Heart left ventricle (tissue), 16 donors: ENCODE measurements at regions of chr1 and their contacts with region 1.

Region 1: GRCh38 chr1:221530791-221531190 is 211.1 kb downstream of the DUSP10 start:
- DNase-seq: no peak
- ATAC-seq: no peak
- H3K4me3 ChIP-seq: no peak overlapping the region
- H3K27ac ChIP-seq: no peak overlapping the region
- H3K4me1 ChIP-seq: no peaks in the 10 kb centered on the region
- H3K27me3 ChIP-seq: peaks cover 0 to 6% (median 0%) of the 10 kb centered on the region in 9 donors
- CTCF ChIP-seq: no peak
- POLR2A ChIP-seq: no peak

Region 2: GRCh38 chr1:221085712-221086375 is 444.9 kb before region 1 on chr1:
- intact Hi-C with region 1: no loop called
- DNase-seq: no peak
- ATAC-seq: no peak
- H3K4me3 ChIP-seq: no peak overlapping the region
- H3K27ac ChIP-seq: no peak overlapping the region
- H3K4me1 ChIP-seq: peaks cover 0 to 10% (median 0%) of the 10 kb centered on the region in 12 donors
- H3K27me3 ChIP-seq: no peaks in the 10 kb centered on the region
- CTCF ChIP-seq: no peak
- POLR2A ChIP-seq: no peak

Region 3: DNA sequence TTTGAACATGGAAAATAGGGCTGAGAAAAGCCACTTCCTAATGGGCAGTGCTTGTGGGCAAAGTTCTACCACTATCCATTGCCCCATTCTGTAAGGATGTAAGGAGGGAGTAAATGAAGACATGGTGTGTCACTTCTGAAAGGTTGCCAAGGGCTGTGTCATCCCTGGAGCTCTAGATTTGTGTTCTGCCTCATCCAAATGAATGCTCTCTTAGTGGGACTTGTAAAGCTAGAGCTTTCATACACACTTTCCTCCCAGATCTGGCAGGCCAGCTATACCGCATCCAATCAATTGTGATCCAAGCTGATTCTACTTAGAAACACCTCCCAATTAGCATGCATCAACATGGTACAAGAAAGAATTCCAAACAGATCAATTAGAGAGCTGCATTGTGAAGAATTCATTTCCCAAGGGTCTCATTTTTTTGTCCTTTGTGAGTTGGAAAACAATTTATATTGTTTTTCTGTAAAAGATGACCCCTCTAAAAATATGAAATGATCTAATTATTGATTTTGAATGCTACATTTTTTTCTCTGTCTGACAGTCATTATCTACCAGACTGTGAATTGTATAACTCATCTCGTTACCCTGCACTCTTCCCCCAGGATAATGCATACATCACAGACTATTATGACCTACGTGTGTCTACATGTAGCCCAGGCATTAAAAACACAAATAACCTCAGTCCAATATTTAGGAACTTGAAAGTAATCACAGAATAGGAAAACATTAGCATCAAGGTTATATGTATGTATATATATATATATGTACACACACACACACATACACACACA is 328.2 kb after region 1 on chr1:
- intact Hi-C with region 1: loop called in 1 of 10 experiments (anchors 10 kb)
- DNase-seq: no peak
- ATAC-seq: no peak
- H3K4me3 ChIP-seq: no peak overlapping the region
- H3K27ac ChIP-seq: no peak overlapping the region
- H3K4me1 ChIP-seq: no peaks in the 10 kb centered on the region
- H3K27me3 ChIP-seq: no peaks in the 10 kb centered on the region
- CTCF ChIP-seq: no peak
- POLR2A ChIP-seq: no peak